Activated T-helper 1 cell treated with anti-CD3 and anti-CD28 coated beads, Interleukin-12 subunit alpha, Interleukin-12 subunit beta, Interleukin-2, Interleukin-4 antibody, amounts not matched to agents 30 ng/mL and 10 ng/mL and 1 ng/mL, durations not matched to agents 14 hours and 24 hours and 36 hours (primary cell): ENCODE measurements at regions of chr5 and their contacts with region 1.

Region 1: DNA sequence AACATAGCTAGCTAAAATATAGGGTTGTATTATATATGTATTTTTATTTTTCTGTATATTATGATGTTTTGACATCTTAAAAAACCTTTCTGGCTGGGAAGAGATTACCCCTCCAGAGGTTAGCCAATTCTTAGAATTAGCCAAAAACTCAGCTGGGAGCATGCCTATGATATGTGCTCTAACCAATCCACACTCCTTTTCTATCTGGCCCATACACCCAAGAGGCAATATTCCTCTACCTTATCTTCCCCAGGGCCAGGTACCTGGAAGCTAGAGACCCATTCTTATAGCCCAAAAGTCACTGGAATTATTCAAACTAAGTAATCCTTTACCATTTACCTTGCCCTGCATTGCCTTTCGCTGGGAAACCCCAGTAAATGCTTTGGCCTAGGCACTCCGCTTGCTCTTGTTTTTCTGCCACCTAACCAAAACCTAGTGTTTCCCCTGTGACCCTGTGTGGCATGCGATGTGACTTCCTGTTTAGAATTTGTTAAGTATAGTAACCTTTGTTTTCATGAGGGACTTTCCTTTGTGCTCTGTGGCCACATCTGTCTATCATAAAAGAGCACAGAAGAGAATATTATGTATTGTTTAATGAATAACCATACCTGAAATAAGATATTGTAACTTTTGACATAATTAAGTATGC is 37.4 kb downstream of the CSNK1G3 start:
- DNase-seq: peak; percentile 70
- H3K4me3 Mint-ChIP-seq: peak overlapping the region; percentile 1
- H3K27ac Mint-ChIP-seq: peak overlapping the region; percentile 91
- H3K4me1 Mint-ChIP-seq: peaks cover 38% of the 10 kb centered on the region
- H3K27me3 Mint-ChIP-seq: no peaks in the 10 kb centered on the region

Region 2: DNA sequence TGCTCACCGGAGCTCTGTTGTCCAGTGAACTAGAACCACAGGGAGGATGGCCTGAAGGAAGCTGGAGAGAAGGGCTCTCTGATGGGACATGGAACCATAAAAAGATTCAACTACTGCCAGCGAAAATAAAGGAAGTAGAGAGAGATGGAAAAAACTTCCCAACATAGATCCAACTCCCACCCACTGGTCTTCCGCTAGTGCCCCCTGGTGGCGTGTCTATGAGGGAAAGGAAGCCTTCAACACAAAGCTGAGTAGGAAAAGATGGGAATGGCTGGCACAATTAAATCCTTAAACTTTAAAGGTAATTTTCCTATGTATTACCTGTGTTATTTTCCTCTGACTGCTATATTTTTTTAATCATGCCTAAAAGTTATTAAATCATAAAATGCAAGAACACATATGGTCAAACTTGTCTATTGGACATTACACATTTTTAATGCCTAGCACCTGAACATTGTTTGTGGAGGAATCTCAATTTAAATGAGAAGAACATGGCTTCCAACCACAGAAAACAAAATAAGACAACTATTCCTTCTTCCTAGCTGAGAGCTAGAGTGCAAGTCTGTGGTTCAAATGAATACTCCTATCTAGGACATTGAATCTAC is 177.7 kb before region 1 on chr5:
- intact Hi-C with region 1: loop called (anchors 1 kb)
- DNase-seq: no peak
- H3K4me3 Mint-ChIP-seq: no peak overlapping the region
- H3K27ac Mint-ChIP-seq: no peak overlapping the region
- H3K4me1 Mint-ChIP-seq: no peaks in the 10 kb centered on the region
- H3K27me3 Mint-ChIP-seq: no peaks in the 10 kb centered on the region

Region 3: GRCh38 chr5:123520677-123521247 is 28.6 kb before region 1 on chr5:
- intact Hi-C with region 1: no loop called
- DNase-seq: no peak
- H3K4me3 Mint-ChIP-seq: no peak overlapping the region
- H3K27ac Mint-ChIP-seq: no peak overlapping the region
- H3K4me1 Mint-ChIP-seq: peaks cover 45% of the 10 kb centered on the region
- H3K27me3 Mint-ChIP-seq: no peaks in the 10 kb centered on the region